ENCODE measurements at regions of chr16 and their contacts with region 1.

Region 1: DNA sequence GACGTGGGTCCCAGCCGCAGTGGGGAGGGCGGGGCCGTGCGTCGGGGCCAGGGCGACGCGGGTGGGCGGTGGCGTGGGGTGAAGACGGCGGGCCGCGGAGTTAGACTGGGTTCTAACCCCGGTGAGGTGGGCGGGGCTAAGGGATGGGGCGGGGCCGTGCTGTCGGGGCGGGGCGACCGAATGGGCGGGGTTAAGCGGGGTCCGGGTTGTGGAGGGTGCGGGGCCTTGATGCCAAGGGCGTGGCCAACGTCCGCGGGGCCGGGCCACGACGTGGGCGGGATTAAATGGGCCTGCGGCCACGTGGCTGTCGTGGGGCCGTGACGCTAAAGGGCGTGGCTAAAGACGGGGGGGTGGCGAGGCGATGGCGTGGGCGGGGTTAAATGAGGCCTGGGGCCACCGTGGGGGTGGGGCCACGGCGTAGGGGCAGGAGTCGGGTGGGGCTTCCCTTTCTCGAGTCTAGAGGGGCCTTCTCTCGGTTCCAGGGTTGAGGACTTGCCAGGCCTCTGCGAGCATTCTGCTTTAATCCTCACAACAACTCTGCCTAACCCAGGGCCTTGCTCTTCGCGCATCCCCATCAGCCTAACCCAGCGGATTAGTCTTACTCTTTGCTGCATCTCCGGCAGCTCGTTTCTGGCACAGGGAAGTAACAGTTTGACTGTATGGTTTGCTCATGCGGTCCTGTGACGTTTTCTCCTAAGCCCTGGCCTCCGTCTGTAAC is 739 bp downstream of the TCF25 start:
- DNase-seq: peak; percentile 92
- ATAC-seq: peak; percentile 69
- H3K4me3 Mint-ChIP-seq: peak overlapping the region; percentile 96
- H3K27ac Mint-ChIP-seq: peak overlapping the region; percentile 99
- H3K4me1 Mint-ChIP-seq: peaks cover 7% of the 10 kb centered on the region
- H3K27me3 Mint-ChIP-seq: no peaks in the 10 kb centered on the region

Region 2: DNA sequence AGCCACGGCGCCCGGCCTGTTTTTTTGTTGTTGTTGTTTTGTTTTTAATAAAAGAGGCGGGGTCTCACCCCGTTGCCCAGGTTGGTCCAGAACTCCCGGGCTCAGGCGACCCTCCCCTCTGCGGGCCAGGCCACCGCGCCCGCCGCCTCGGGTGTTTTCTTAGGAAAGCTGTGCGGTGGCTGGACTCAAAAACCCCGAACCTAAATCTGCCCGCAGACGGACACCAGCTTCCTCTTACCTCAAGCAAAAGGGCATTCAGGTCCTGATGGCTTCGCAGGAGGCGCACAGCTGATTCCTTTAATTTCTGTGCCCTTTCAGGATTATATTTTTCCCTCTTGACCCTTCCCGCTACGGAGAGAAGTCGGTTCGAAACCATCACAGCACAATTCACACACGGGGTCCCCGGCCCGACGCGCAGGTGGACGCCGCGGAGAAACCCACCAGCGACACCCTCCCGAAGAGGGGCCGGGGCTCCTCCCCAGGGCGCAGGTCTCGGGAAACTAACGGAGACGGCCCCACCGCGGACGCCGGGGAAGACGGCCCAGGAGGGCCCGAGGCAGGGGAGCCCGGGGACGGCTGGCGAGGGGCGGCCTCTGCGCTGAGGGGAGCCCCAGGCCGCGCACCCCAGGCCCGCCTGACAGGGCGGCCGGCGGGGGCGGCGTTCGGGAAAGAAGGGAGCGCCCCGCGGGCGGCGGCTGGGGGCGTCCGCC is 58.3 kb before region 1 on chr16:
- POLR2A ChIA-PET with region 1: interaction called, 10 read pairs
- DNase-seq: no peak
- ATAC-seq: peak; percentile 27
- H3K4me3 Mint-ChIP-seq: peak overlapping the region; percentile 88
- H3K27ac Mint-ChIP-seq: peak overlapping the region; percentile 45
- H3K4me1 Mint-ChIP-seq: peaks cover 22% of the 10 kb centered on the region
- H3K27me3 Mint-ChIP-seq: no peaks in the 10 kb centered on the region

Region 3: DNA sequence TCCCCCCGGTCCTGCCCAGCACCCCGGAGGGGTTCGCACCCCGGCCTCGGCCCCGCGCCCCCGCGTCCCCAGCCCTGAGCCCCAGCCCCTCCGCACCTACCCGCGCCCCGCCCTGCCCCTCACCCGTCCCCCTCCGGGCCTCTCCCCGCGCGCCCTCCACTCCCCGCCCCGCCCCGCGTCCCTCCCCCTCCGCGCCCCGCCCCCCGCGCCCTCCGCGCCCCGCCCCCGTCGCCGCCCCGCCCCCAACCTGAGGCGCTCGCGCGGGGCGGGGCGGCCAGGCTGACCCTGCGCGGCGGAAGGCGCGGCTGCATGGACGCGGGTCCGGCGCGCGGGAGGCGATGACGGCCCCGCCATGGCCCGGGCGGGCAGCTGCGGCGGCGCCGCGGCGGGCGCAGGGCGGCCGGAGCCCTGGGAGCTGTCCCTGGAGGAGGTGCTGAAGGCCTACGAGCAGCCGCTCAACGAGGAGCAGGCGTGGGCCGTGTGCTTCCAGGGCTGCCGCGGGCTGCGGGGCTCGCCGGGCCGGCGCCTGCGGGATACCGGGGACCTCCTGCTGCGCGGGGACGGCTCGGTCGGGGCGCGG is 45.8 kb before region 1 on chr16 and contains the start of gene SPIRE2:
- POLR2A ChIA-PET with region 1: no interaction called
- DNase-seq: peak; percentile 84
- ATAC-seq: peak; percentile 97
- H3K4me3 Mint-ChIP-seq: peak within 1 kb of the TSS; percentile 47
- H3K27ac Mint-ChIP-seq: no peak within 1 kb of the TSS
- H3K4me1 Mint-ChIP-seq: peaks cover 3% of the 10 kb centered on the region
- H3K27me3 Mint-ChIP-seq: peaks cover 35% of the 10 kb centered on the region
- total RNA-seq, gene SPIRE2: 1.5 to 1.8 TPM

Region 4: DNA sequence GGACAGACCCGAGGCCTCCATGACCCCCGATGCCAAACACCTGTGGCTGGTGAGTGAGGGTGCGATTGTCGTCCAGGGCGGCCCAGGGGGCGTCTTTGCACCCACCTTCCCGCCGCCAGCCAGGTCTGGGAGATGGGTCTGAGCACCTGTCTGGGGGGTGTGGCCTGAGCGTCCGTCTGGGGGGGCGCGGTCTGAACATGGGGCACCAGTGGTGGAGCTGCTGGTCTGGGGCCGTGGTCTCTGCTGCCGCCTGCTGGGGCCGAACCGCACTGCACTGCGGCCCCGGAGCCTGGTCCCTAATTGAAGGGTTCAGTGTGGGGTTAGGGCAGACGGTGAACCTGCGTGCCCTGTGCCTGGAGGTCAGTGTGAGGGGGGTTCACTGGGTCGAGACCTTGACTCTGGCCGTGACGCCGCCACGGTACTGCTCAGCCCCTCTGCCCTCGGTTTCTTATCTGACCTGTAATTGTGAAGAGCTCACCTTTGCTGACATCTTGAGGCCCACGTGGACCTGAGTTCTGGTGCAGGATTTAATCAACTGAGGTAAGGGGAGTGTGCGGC is 13.3 kb before region 1 on chr16:
- POLR2A ChIA-PET with region 1: interaction called, 44 read pairs
- DNase-seq: peak; percentile 90
- ATAC-seq: peak; percentile 75
- H3K4me3 Mint-ChIP-seq: no peak overlapping the region
- H3K27ac Mint-ChIP-seq: peak overlapping the region; percentile 2
- H3K4me1 Mint-ChIP-seq: peaks cover 29% of the 10 kb centered on the region
- H3K27me3 Mint-ChIP-seq: no peaks in the 10 kb centered on the region

Region 5: DNA sequence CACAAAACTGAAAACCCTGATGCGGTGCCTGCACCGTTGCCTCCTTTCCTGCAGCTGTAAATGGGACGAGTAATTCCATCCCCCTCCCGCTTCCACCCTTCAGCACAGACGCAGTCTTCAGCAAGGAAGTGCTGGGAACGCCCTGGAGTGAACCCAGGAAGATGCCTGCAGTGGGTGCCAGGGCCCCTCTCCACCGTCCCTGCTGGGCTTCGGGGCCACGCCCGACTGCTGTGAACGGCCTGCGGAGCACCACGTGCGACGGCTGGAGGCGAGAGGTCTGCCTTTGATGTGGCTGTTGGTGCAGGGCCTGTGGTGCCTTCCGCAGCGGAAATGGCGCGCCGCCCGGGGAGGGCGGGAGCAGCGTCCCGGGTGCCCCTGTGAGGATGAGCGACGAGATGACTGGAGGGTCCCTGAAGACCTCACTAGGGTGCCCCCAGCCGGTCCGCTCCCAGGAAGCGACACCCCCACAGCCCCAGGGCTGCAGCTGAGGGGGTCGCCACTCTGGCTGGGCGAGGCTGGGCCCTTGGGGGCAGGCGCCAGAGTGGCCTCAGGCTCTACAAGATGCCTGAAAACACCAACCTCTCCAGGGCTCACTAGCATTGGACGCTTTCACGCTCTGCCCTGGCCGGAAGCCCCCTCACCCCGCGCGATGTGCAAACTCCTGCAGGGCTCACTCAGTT is 43.8 kb after region 1 on chr16:
- POLR2A ChIA-PET with region 1: interaction called, 15 read pairs
- DNase-seq: peak; percentile 91
- ATAC-seq: peak; percentile 73
- H3K4me3 Mint-ChIP-seq: peak overlapping the region; percentile 69
- H3K27ac Mint-ChIP-seq: peak overlapping the region; percentile 76
- H3K4me1 Mint-ChIP-seq: peaks cover 34% of the 10 kb centered on the region
- H3K27me3 Mint-ChIP-seq: peaks cover 34% of the 10 kb centered on the region

Region 6: GRCh38 chr16:89972244-89973234 is 98.4 kb after region 1 on chr16:
- POLR2A ChIA-PET with region 1: interaction called, 10 read pairs
- DNase-seq: peak; percentile 98
- ATAC-seq: peak; percentile 97
- H3K4me3 Mint-ChIP-seq: peak overlapping the region; percentile 99
- H3K27ac Mint-ChIP-seq: peak overlapping the region; percentile 97
- H3K4me1 Mint-ChIP-seq: peaks cover 21% of the 10 kb centered on the region
- H3K27me3 Mint-ChIP-seq: no peaks in the 10 kb centered on the region

Measured in activated naive CD8-positive, alpha-beta T cell treated with anti-CD3 and anti-CD28 coated beads, Interleukin-2, amount 10 ng/mL, durations not matched to agents 7 days and 5 days (primary cell).